CD4-positive, alpha-beta memory T cell (primary cell): ENCODE measurements at regions of chr20 and their contacts with region 1.

Region 1: DNA sequence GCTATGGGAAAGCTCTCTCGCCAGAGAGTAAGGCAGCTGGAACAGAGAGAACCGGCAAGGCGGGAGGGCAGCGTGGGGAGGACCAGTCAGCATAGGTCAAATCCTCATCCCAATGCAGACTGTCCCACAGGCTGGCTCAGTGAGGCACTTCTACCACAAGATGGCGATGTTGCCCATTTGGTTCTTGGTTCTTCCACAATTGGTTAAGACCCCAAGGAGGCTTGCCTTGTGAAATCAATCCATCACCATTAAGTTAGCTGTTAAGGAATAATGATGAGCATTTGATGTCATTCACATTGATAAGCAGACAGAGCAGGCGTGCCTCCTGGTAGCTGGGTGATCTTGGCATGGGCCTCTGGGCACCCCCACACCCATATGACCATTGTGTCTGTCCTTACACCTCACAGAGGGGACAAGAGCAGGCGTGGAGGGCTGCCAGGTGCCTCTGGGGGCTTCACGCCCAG is 2.4 kb downstream of the CSTL1 start:
- DNase-seq: peak; percentile 12 to 58 (median 39)
- H3K4me3 ChIP-seq: no peak overlapping the region
- H3K4me3 Mint-ChIP-seq: no peak overlapping the region
- H3K27ac ChIP-seq: no peak overlapping the region
- H3K27ac Mint-ChIP-seq: no peak overlapping the region
- H3K4me1 ChIP-seq: no peaks in the 10 kb centered on the region
- H3K4me1 Mint-ChIP-seq: no peaks in the 10 kb centered on the region
- H3K27me3 ChIP-seq: peaks cover 3% of the 10 kb centered on the region
- H3K27me3 Mint-ChIP-seq: peaks cover 0 to 3% of the 10 kb centered on the region in 2 donors

Region 2: DNA sequence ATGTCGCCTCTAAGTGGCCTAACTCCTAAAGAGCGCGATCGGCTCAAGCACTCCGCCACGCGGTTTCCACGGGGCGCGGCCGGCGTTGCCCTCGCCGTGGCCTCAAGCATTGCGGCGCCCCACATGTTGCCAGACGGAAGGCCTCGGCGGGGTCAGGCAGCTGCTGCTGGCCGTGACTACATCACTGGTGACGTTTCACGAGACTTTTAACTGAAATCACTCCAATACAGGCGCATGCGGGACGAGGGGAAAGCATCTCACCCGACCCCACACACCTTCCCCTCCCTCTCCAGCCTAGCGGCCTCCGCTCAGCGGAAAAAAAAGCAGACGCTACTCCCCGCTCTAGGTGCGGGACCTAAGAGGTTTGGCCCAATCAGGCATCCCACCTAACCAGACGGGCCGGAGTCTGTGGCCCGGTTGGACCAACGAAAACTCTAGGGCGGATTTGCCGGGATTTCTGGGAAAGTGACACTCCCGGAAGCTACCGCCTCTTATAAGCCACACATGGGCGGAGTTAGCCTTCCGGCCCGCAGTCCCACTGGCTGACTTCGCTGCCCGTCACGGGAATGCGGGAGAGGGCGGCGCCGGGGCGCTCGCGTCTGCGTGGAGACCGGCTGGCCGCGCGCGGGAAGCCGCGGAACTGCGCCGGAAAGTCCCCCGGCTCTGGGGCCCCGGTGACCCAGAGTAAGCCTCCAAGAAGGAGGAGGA is 91.5 kb before region 1 on chr20 and contains the start of gene NXT1:
- CTCF ChIA-PET with region 1: interaction called, 11 read pairs
- POLR2A ChIA-PET with region 1: no interaction called
- intact Hi-C with region 1: no loop called
- DNase-seq: peak; percentile 96 to 98 (median 96)
- H3K4me3 ChIP-seq: peak within 1 kb of the TSS; percentile 93 to 97
- H3K4me3 Mint-ChIP-seq: peak within 1 kb of the TSS; percentile 85 to 99 (median 98)
- H3K27ac ChIP-seq: peak within 1 kb of the TSS; percentile 100
- H3K27ac Mint-ChIP-seq: peak within 1 kb of the TSS; percentile 99 to 100 (median 100)
- H3K4me1 ChIP-seq: peaks cover 21% of the 10 kb centered on the region
- H3K4me1 Mint-ChIP-seq: peaks cover 14 to 38% (median 23%) of the 10 kb centered on the region in 4 donors
- H3K27me3 ChIP-seq: no peaks in the 10 kb centered on the region
- H3K27me3 Mint-ChIP-seq: no peaks in the 10 kb centered on the region
- total RNA-seq, gene NXT1: 21.5 to 23.6 TPM

Region 3: GRCh38 chr20:23451956-23452487 is 10.1 kb after region 1 on chr20:
- CTCF ChIA-PET with region 1: interaction called, 12 read pairs
- POLR2A ChIA-PET with region 1: no interaction called
- intact Hi-C with region 1: no loop called
- DNase-seq: no peak
- H3K4me3 ChIP-seq: no peak overlapping the region
- H3K4me3 Mint-ChIP-seq: no peak overlapping the region
- H3K27ac ChIP-seq: no peak overlapping the region
- H3K27ac Mint-ChIP-seq: no peak overlapping the region
- H3K4me1 ChIP-seq: no peaks in the 10 kb centered on the region
- H3K4me1 Mint-ChIP-seq: peaks cover 4 to 10% (median 8%) of the 10 kb centered on the region in 4 donors
- H3K27me3 ChIP-seq: no peaks in the 10 kb centered on the region
- H3K27me3 Mint-ChIP-seq: peaks cover 2 to 9% of the 10 kb centered on the region in 2 donors

Region 4: GRCh38 chr20:23606652-23607049 is 164.8 kb after region 1 on chr20:
- CTCF ChIA-PET with region 1: interaction called, 10 read pairs
- POLR2A ChIA-PET with region 1: no interaction called
- intact Hi-C with region 1: no loop called
- DNase-seq: peak; percentile 18 to 40 (median 33)
- H3K4me3 ChIP-seq: no peak overlapping the region
- H3K4me3 Mint-ChIP-seq: no peak overlapping the region
- H3K27ac ChIP-seq: no peak overlapping the region
- H3K27ac Mint-ChIP-seq: no peak overlapping the region
- H3K4me1 ChIP-seq: no peaks in the 10 kb centered on the region
- H3K4me1 Mint-ChIP-seq: no peaks in the 10 kb centered on the region
- H3K27me3 ChIP-seq: no peaks in the 10 kb centered on the region
- H3K27me3 Mint-ChIP-seq: peaks cover 3 to 6% of the 10 kb centered on the region in 2 donors

Region 5: DNA sequence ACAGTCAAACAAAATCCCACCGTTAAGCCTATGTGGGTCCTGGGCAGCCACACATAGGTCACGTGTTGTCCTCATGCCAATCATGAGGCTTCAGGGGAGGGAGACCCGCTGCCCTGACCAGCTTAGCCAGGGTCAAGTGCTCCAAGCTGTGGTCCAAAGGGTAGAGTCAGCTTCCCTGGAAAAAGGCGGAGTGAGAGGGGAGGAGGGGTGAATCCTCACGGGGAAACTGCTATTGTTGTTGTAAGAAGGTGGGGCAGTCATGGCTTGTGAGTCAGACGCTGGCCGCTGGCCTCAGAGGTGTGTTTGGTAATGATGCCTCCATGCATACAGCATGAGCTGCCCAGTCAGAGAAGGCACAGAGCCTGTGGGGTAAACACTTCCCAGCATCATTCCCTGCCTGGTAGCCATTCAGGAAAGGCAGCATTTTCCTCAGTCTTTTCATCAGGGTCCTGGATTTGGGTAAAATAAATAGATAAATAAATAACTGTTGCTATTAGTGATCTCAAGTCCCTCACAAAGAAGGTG is 187.2 kb after region 1 on chr20:
- CTCF ChIA-PET with region 1: no interaction called
- POLR2A ChIA-PET with region 1: no interaction called
- intact Hi-C with region 1: no loop called
- DNase-seq: no peak
- H3K4me3 ChIP-seq: no peak overlapping the region
- H3K4me3 Mint-ChIP-seq: no peak overlapping the region
- H3K27ac ChIP-seq: no peak overlapping the region
- H3K27ac Mint-ChIP-seq: peak overlapping the region in 1 of 7 donors; percentile 44
- H3K4me1 ChIP-seq: no peaks in the 10 kb centered on the region
- H3K4me1 Mint-ChIP-seq: no peaks in the 10 kb centered on the region
- H3K27me3 ChIP-seq: no peaks in the 10 kb centered on the region
- H3K27me3 Mint-ChIP-seq: peaks cover 3 to 8% of the 10 kb centered on the region in 2 donors

Region 6: GRCh38 chr20:23832775-23833508 is 391.1 kb after region 1 on chr20:
- CTCF ChIA-PET with region 1: no interaction called
- POLR2A ChIA-PET with region 1: no interaction called
- intact Hi-C with region 1: no loop called
- DNase-seq: no peak
- H3K4me3 ChIP-seq: no peak overlapping the region
- H3K4me3 Mint-ChIP-seq: no peak overlapping the region
- H3K27ac ChIP-seq: no peak overlapping the region
- H3K27ac Mint-ChIP-seq: no peak overlapping the region
- H3K4me1 ChIP-seq: no peaks in the 10 kb centered on the region
- H3K4me1 Mint-ChIP-seq: no peaks in the 10 kb centered on the region
- H3K27me3 ChIP-seq: no peaks in the 10 kb centered on the region
- H3K27me3 Mint-ChIP-seq: peaks cover 4 to 19% of the 10 kb centered on the region in 2 donors